GM10248 (cell line): ENCODE measurements at regions of chr9 and their contacts with region 1.

Region 1: DNA sequence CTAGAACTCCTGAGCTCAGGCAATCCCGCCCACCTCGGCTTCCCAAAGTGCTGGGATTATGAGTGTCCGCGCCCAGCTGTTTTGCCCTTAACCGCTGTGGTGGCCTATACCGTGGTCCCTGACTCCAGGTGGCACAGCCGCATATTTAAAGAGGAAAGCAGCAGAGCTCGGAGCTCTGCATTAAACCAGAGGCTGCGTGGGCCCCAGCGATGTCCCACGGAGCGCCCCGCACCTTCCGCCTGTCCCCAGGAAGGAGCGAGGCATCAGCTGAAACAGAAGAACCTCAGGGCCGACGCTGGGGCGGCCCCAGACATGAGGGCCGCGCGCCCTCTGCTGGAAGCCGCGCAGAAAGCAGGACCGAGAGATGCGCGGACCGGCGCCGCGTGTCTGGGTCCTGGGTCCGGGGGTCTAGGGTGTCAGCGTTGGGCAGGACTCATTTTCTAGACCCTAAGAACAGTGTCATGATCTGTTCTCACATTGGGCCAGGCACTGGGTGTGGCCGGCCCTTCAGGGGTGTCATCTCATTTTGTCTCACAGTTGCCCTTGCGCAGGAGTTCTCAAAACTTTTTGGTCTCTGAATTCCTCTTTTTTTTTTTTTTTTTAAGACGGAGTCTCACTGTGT is 37.7 kb downstream of the LAMC3 start:
- DNase-seq: peak; percentile 88
- CTCF ChIP-seq: peak; percentile 96

Region 2: GRCh38 chr9:131018621-131019020 is 28.1 kb before region 1 on chr9:
- CTCF ChIA-PET with region 1: interaction called, 19 read pairs
- POLR2A ChIA-PET with region 1: no interaction called
- DNase-seq: no peak
- CTCF ChIP-seq: no peak